ENCODE measurements at regions of chr7 and their contacts with region 1.

Region 1: DNA sequence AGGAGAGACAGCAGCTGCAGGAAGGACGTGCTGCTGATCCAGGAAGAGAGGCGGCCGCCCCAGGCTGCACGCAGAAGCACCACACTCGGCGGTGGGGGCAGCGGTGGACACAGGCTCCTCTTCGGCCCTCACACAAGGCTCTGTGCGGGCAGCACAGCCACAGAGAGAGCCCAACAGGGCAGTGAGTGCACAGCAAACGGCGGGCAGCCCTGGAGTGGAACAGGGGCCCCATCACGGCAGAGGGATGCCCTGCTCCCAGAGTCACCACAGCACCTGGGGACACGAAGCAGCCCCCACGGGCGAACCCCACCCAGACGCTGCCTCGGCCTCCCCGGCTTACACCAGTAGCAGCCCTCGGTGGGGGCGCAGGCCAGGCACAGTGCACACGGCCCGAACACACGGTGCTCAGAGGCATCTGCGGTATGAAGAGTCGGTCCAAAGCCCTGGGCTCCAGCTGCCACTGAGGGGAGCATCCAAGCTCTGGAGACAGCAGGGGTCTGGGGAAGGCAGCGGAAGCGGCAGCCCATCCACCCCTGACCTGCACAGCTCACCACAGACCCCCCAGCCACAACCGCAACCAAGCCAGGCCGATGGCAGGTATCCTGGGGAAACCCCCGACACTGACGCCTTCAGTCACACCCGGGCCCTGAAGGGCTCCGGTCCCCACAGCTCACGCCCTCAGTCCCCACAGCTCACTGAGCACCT is 16.8 kb downstream of the NUDT1 start:
- DNase-seq: no peak
- H3K4me3 ChIP-seq: no peak overlapping the region
- H3K27ac ChIP-seq: no peak overlapping the region
- H3K4me1 ChIP-seq: no peaks in the 10 kb centered on the region
- H3K27me3 ChIP-seq: no peaks in the 10 kb centered on the region
- CTCF ChIP-seq: no peak
- POLR2A ChIP-seq: no peak

Region 2: GRCh38 chr7:2354186-2354938 is 95.5 kb after region 1 on chr7 and contains the start of gene EIF3B:
- intact Hi-C with region 1: loop called (anchors 10 kb)
- DNase-seq: peak; percentile 89
- H3K4me3 ChIP-seq: peak within 1 kb of the TSS; percentile 98 to 99
- H3K27ac ChIP-seq: peak within 1 kb of the TSS; percentile 99 to 100
- H3K4me1 ChIP-seq: peaks cover 30% of the 10 kb centered on the region
- H3K27me3 ChIP-seq: no peaks in the 10 kb centered on the region
- CTCF ChIP-seq: peak in 1 of 3 experiments; percentile 34
- POLR2A ChIP-seq: no peak
- total RNA-seq, gene EIF3B: 237 to 263 TPM

Measured in testis (tissue), 5 donors.